ENCODE measurements at regions of chr17 and their contacts with region 1.

Region 1: DNA sequence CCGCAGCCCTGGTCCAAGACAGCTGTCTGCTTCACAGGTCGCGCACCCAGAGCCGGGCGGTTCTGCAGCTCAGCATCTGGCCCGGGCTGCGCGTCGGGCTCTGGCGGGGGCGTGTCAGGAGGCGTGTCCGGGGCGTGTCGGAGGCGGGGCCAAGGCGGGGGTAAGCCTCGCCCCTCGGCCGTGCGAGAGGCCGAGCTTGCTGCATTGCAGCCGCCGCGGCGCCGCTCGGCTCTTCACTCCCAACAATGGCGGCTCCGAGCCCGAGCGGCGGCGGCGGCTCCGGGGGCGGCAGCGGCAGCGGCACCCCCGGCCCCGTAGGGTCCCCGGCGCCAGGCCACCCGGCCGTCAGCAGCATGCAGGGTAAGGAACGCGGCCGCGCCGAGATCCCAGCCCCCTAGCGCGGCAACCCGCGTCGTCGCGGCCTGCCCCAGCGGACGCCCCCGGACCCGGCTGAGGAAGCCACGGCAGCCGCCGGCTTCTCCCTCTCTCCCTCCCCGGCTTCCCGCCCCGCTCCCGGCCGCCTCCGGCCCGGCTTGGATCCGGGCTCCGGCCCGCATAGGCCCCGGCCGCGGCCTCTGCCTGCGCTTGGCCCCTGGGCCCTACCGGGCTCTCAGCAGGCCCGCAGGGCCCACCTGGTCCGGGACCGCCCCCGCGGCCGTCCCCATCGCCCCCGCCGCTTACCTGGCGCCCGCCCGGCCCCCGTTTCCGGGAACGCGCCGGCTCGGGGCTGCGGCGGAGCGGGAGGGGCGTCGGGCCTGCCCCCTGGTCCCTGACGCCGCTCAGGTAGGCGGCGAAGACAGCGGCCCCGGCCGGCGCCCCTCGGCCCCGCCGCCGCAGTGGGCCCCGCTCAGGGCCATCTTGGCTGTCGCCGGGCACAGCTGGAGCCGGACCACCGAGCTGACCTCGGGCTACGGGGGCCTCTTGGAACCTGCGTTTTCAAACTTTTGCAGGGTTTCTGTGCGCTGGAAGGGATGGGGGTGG is at the start of gene MAP2K4:
- DNase-seq: peak; percentile 86 to 96
- H3K4me3 ChIP-seq: peak within 1 kb of the TSS; percentile 77 to 78
- H3K27ac ChIP-seq: peak within 1 kb of the TSS; percentile 75 to 90
- H3K4me1 ChIP-seq: peaks cover 0 to 41% (median 21%) of the 10 kb centered on the region in 4 donors
- H3K27me3 ChIP-seq: no peaks in the 10 kb centered on the region
- CTCF ChIP-seq: no peak

Region 2: GRCh38 chr17:11997147-11997846 is 23.6 kb before region 1 on chr17 and contains the start of gene ZNF18:
- intact Hi-C with region 1: loop called (anchors 1 kb)
- DNase-seq: peak; percentile 94 to 98
- H3K4me3 ChIP-seq: peak within 1 kb of the TSS; percentile 68 to 79
- H3K27ac ChIP-seq: peak within 1 kb of the TSS; percentile 77 to 88
- H3K4me1 ChIP-seq: peaks cover 0 to 9% (median 4%) of the 10 kb centered on the region in 4 donors
- H3K27me3 ChIP-seq: no peaks in the 10 kb centered on the region
- CTCF ChIP-seq: peak in 1 of 2 experiments; percentile 21

Measured in tibial artery (tissue), 4 donors.